ENCODE measurements at regions of chr5 and their contacts with region 1.

Region 1: DNA sequence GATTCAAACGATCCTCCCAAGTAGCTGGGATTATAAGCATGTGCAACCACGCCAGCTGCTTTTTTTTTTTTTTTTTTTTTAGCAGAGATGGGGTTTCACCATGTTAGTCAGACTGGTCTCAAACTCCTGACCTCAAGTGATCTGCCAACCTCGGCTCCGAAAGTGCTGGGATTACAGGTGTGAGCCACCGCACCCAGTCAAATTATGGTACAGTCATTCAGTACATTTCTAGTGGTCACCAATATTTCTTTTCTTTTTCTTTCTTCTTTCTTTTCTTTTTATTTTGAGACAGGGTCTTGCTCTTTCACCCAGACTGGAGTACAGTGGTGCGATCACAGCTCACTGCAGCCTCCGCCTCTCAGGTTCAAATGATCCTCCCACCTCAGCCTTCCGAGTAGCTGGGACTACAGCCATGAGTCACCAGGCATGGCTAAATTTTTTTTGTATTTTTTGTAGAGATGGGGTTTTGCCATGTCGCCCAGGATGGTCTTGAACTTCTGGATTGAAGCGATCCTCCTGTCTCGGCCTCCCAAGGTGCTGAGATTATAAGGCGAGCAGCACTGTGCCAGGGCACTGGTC is 25.4 kb upstream of the DCP2 start:
- DNase-seq: no peak
- ATAC-seq: peak; percentile 98
- H3K4me3 ChIP-seq: no peak overlapping the region
- H3K27ac ChIP-seq: no peak overlapping the region
- H3K4me1 ChIP-seq: peaks cover 5% of the 10 kb centered on the region; the same call in 1 of the 2 replicates
- H3K27me3 ChIP-seq: no peaks in the 10 kb centered on the region
- CTCF ChIP-seq: no peak
- EP300 ChIP-seq: 0 out of 4 replicates have a peak, but pooled peaks of 1 of the 2 experiments have one; percentile 33
- POLR2A ChIP-seq: no peak
- RAD21 ChIP-seq: no peak

Region 2: GRCh38 chr5:112930082-112930344 is 21.2 kb before region 1 on chr5:
- CTCF ChIA-PET with region 1: no interaction called
- POLR2A ChIA-PET with region 1: interaction called, 6 read pairs
- RAD21 ChIA-PET with region 1: no interaction called
- SMC1A ChIA-PET with region 1: interaction called, 3 read pairs
- in situ Hi-C with region 1: no loop called
- intact Hi-C with region 1: loop called (anchors 1 kb)
- DNase-seq: peak; percentile 84
- ATAC-seq: peak; percentile 69
- H3K4me3 ChIP-seq: no peak overlapping the region
- H3K27ac ChIP-seq: peak overlapping the region; percentile 85
- H3K4me1 ChIP-seq: peaks cover 56% of the 10 kb centered on the region
- H3K27me3 ChIP-seq: no peaks in the 10 kb centered on the region
- CTCF ChIP-seq: no peak
- EP300 ChIP-seq: peak; percentile 28 to 70; a peak in 1 of 4 replicates
- POLR2A ChIP-seq: no peak
- RAD21 ChIP-seq: no peak